Activated naive CD4-positive, alpha-beta T cell treated with anti-CD3 and anti-CD28 coated beads for 36 hours (primary cell): ENCODE measurements at regions of chr14 and their contacts with region 1.

Region 1: GRCh38 chr14:90256354-90257131 is at the start of gene PSMC1:
- DNase-seq: peak; percentile 96
- H3K4me3 Mint-ChIP-seq: peak within 1 kb of the TSS; percentile 98
- H3K27ac Mint-ChIP-seq: peak within 1 kb of the TSS; percentile 93
- H3K4me1 Mint-ChIP-seq: peaks cover 32% of the 10 kb centered on the region
- H3K27me3 Mint-ChIP-seq: peaks cover 3% of the 10 kb centered on the region
- total RNA-seq, gene PSMC1: 102 to 105 TPM

Region 2: DNA sequence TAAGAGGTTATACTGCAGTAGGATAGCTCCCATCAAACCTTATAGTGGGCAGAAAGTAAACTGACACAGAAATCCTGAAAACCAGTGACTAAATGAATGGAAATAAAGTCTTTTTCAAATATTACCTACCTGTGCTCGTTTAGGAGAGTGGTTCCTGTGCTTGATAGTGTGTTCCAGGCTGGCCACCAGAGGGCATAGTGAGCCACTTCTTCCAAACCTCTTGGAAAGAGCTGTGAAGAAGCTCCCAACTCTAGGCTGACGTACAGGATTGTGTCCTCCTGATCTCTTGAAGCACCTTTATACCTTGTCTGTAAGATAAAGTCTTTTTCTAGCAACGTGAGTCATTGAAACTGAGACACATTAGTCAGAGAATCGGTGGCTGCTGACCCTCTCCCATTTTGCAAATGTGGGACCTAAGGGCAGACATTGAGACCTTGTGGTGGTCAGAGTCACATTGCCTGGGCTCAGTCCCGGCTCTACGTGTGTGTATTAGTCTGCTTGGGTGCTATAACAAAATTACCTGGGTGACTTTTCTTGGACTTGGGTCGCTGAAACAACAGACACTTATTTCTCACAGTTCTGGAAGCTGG is 283.2 kb before region 1 on chr14:
- CTCF ChIA-PET with region 1: no interaction called
- intact Hi-C with region 1: no loop called
- DNase-seq: peak; percentile 70
- H3K4me3 Mint-ChIP-seq: no peak overlapping the region
- H3K27ac Mint-ChIP-seq: no peak overlapping the region
- H3K4me1 Mint-ChIP-seq: no peaks in the 10 kb centered on the region
- H3K27me3 Mint-ChIP-seq: no peaks in the 10 kb centered on the region

Region 3: GRCh38 chr14:90274808-90275457 is 18.4 kb after region 1 on chr14:
- CTCF ChIA-PET with region 1: interaction called, 3 read pairs
- intact Hi-C with region 1: loop called (anchors 1 kb)
- DNase-seq: peak; percentile 54
- H3K4me3 Mint-ChIP-seq: no peak overlapping the region
- H3K27ac Mint-ChIP-seq: peak overlapping the region; percentile 89
- H3K4me1 Mint-ChIP-seq: peaks cover 19% of the 10 kb centered on the region
- H3K27me3 Mint-ChIP-seq: no peaks in the 10 kb centered on the region